ENCODE measurements at regions of chr1 and their contacts with region 1.

Region 1: DNA sequence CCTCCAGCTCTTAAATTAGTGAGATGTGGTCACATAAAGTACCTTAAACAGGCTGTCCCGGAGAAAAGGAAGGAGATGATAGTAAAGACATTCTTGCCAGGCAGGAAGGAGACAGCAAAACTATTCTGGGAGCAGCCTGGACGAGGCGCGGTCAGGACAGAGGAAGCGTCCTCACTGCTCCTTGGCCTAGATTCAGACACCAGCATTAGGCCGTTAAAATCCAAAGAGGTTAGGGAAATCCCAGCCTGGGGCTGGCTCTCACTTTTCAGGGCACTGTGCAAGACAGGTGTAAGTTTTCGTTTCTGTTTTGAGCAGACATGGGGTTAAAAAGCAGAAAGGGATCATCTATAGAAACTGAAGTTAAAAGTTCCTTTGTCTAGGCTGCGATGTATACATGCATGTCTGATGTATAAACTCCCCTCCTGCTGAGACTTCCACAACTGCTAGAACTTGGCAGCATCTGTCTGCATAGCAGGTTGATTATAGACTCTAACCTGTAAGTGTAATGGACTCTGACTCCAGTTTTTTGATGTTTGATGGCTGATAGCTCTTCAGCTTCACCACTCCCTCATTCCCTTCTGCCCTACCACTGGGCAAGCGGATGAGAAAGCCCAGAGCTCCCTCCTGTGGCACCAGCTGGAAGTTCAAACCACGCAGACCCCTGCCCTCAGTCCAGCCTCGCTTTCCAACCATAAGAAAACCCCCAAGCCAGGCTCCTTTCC is 21.5 kb downstream of the STPG1 start:
- ATAC-seq: peak; percentile 66 to 95 (median 86)
- H3K4me3 ChIP-seq: no peak overlapping the region
- H3K27ac ChIP-seq: no peak overlapping the region
- H3K4me1 ChIP-seq: no peaks in the 10 kb centered on the region

Region 2: DNA sequence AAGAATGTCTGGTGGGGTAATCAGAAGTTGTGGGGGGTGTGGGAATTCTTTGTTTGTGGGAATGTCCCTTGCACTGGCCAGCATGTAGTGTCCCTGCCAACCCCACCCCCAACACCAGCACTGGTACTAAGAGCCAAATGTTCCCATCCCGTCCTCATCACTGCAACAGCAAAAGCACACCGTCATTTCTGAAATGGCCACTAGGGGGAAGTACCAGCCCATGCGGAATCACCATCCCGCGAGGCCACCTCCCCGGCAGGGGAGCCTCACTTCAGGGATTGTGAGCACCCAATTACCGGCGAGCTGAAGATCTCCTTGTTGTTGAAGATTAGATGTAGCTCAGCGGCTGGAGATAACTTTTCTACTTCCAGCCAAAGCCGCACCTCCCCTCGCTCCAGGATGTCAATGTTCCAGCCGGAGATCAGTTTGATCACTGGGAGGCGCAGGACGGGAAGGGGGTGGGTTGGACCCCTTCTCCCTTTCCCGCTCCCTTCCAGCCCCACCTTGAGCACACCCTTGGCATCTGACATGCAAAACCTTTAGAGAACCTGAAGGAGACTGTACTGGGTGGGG is 321.1 kb before region 1 on chr1:
- in situ Hi-C with region 1: loop called in 1 of 9 experiments (anchors 25 kb)
- ATAC-seq: peak; percentile 84 to 98 (median 92)
- H3K4me3 ChIP-seq: no peak overlapping the region
- H3K27ac ChIP-seq: no peak overlapping the region
- H3K4me1 ChIP-seq: no peaks in the 10 kb centered on the region

Region 3: GRCh38 chr1:24642481-24643361 is 250.7 kb after region 1 on chr1 and contains the start of gene SRRM1:
- in situ Hi-C with region 1: loop called in 1 of 9 experiments (anchors 25 kb)
- ATAC-seq: peak; percentile 83 to 95 (median 94)
- H3K4me3 ChIP-seq: peak within 1 kb of the TSS; percentile 55 to 83 (median 69)
- H3K27ac ChIP-seq: peak within 1 kb of the TSS; percentile 95 to 97
- H3K4me1 ChIP-seq: peaks cover 10 to 15% of the 10 kb centered on the region in 2 donors
- total RNA-seq, gene SRRM1: 36.6 to 141 (median 69.1) TPM

Measured in motor neuron (in vitro differentiated cells).